Mammary epithelial cell (primary cell): ENCODE measurements at regions of chr3 and their contacts with region 1.

Region 1: DNA sequence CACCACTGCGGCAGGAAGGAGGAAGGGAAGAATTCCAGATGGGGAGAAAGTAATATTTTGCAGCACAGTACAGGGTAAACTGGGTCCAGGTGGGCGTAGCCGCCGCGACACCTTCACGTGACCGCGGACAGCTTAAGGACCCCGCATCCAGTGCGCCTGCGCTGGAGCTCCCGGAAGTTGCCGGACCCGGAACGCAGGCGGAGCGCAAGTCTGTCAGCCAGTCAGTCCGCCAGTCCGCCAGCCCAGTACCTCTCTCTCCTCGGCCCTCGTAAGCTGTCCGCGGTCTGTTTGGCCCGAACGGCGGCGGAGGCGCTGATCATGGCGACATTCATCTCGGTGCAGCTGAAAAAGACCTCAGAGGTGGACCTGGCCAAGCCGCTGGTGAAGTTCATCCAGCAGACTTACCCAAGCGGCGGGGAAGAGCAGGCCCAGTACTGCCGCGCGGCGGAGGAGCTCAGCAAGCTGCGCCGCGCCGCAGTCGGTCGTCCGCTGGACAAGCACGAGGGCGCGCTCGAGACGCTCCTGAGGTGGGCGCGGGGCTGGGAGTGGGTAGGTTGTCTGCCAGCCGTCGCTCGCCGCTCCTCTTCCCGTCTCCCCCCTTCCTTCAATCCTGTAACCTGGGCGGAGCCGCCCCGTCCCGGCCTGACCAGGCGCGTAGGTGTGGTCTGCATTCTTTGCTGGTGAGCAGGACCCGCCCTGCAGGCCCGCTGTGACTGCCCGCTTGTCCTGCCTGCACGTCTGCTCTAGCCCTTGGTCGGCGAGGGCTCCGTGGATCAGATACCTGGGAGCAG is at the start of gene PDCD6IP:
- DNase-seq: peak; percentile 96
- H3K4me3 ChIP-seq: peak within 1 kb of the TSS; percentile 67 to 95 (median 95)
- H3K27ac ChIP-seq: peak within 1 kb of the TSS; percentile 96
- H3K4me1 ChIP-seq: peaks cover 26% of the 10 kb centered on the region
- H3K27me3 ChIP-seq: no peaks in the 10 kb centered on the region
- CTCF ChIP-seq: peak in 1 of 2 donors; percentile 19
- total RNA-seq, gene PDCD6IP: 264 to 276 TPM

Region 2: DNA sequence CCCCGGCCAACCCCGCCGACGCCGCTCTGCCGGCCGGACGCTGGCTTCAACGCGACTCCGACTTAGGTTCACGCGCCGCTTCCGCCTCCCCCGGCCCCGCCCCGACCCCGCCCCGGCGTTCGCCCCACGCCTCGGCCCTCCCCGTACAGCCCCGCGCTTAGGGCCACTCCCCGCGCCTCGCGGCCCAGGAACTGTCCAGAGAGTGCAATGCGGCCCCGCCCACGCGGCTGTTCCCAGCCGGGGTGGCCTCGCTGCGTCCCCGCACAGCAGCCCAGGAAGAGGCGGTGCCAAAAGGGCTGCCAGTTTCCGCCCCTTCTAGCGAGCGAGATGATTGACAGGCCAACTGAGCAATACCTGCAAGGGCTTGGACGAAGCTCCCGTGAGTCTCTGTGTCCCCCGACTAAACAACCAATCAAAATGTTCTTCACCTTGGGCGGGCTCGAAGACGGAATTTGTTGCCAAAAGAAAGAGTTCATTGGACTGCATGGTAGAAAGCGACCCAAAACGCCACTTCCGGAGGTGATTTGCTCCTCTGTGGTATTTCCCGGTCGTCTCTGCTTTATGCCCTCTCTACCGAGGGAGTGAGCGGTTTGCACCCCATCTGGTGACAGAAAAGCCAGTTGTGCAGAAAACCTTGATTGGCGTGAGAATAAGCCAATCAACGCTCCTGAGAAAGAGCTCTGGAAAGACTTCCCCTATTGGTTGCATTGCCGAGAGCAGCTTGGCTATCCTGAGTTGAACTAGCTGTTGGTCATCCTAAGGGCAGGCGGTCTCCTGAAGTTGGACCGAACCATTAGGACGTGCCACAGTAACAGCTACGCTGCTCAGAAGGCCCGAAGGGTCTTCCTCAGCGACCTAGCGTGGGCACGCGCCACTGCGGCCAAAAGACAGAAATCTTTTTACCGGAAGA is 358.0 kb before region 1 on chr3 and contains the start of gene UBP1:
- CTCF ChIA-PET with region 1: no interaction called
- dilution Hi-C with region 1: no loop called
- in situ Hi-C with region 1: loop called in 1 of 2 experiments (anchors 25 kb)
- intact Hi-C with region 1: no loop called
- DNase-seq: peak; percentile 100
- H3K4me3 ChIP-seq: peak within 1 kb of the TSS; percentile 86 to 93 (median 88)
- H3K27ac ChIP-seq: peak within 1 kb of the TSS; percentile 83
- H3K4me1 ChIP-seq: peaks cover 19% of the 10 kb centered on the region
- H3K27me3 ChIP-seq: no peaks in the 10 kb centered on the region
- CTCF ChIP-seq: no peak
- total RNA-seq, gene UBP1: 44.8 to 63.7 TPM

Region 3: GRCh38 chr3:33636125-33636850 is 162.3 kb before region 1 on chr3:
- CTCF ChIA-PET with region 1: no interaction called
- dilution Hi-C with region 1: loop called (anchors 25 kb)
- in situ Hi-C with region 1: no loop called
- intact Hi-C with region 1: no loop called
- DNase-seq: peak; percentile 37
- H3K4me3 ChIP-seq: no peak overlapping the region
- H3K27ac ChIP-seq: no peak overlapping the region
- H3K4me1 ChIP-seq: no peaks in the 10 kb centered on the region
- H3K27me3 ChIP-seq: no peaks in the 10 kb centered on the region
- CTCF ChIP-seq: peak; percentile 45 to 61

Region 4: DNA sequence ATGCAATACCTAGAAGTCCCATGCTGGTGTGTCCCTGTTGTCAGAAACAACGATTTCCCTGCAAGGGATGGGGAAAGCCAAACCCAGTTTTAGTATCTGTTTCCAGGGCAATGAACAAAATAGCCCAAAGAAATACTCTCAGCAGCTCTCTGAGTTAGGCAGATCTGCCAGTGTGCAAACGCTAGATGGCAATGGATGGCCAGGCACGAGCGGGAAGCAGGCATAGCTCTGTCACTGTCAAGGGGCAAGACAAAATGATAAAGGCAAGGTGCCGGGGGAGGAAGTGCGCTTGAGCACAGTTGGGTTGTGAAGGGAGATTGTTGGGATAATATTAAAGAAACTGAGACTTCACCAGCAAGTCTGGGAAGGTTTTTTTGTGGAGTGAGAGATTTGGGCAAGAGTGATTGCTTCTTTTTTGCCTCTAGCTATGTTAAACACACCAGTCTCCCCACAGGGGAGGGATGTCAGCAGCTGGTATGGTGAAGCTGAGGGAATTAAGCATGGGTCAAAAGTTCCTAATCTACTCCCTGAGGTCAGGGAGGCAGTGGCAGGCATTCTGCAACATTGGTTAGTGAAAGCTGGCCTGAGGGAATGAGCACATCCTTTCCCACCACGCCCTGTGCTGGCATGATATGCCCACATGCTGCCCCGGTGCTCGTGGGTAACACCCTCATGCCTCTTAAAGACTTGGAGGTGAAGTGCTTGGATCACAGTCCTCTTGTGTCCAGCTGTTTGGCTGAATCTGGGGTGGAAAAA is 117.4 kb after region 1 on chr3:
- CTCF ChIA-PET with region 1: no interaction called
- dilution Hi-C with region 1: no loop called
- in situ Hi-C with region 1: no loop called
- intact Hi-C with region 1: no loop called
- DNase-seq: peak; percentile 43
- H3K4me3 ChIP-seq: no peak overlapping the region
- H3K27ac ChIP-seq: no peak overlapping the region
- H3K4me1 ChIP-seq: peaks cover 27% of the 10 kb centered on the region
- H3K27me3 ChIP-seq: no peaks in the 10 kb centered on the region
- CTCF ChIP-seq: peak; percentile 38 to 49